ENCODE measurements at regions of chr17 and their contacts with region 1.

Region 1: DNA sequence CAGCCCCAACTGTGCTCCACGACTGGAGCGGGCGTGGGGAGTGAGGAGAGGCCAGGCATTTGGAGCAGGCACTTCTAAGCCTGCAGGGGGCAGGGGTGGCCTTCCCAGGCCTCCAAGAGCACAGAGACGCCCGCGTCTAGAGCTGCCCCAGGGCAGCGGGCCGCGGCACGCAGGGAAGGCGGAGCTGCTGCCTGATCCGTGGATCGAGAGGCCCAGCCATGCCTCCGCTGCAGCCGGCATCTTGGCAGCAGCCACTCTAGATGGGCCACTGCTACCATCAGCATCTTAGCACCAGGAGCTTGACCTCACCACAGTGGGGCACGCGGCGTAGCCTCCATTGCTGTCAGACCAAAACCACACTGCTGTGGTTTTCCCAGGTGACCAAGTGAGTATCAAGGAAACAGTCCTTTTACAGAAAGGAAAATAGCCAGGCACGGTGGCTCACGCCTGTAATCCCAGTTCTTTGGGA is 20.4 kb upstream of the WDR45B start:
- DNase-seq: peak; percentile 65
- H3K4me3 Mint-ChIP-seq: no peak overlapping the region
- H3K27ac Mint-ChIP-seq: no peak overlapping the region
- H3K4me1 Mint-ChIP-seq: peaks cover 2% of the 10 kb centered on the region
- H3K27me3 Mint-ChIP-seq: no peaks in the 10 kb centered on the region

Region 2: GRCh38 chr17:82502207-82502606 is 166.5 kb before region 1 on chr17:
- CTCF ChIA-PET with region 1: no interaction called
- POLR2A ChIA-PET with region 1: no interaction called
- intact Hi-C with region 1: no loop called
- DNase-seq: no peak
- H3K4me3 Mint-ChIP-seq: no peak overlapping the region
- H3K27ac Mint-ChIP-seq: no peak overlapping the region
- H3K4me1 Mint-ChIP-seq: peaks cover 15% of the 10 kb centered on the region
- H3K27me3 Mint-ChIP-seq: no peaks in the 10 kb centered on the region

Region 3: DNA sequence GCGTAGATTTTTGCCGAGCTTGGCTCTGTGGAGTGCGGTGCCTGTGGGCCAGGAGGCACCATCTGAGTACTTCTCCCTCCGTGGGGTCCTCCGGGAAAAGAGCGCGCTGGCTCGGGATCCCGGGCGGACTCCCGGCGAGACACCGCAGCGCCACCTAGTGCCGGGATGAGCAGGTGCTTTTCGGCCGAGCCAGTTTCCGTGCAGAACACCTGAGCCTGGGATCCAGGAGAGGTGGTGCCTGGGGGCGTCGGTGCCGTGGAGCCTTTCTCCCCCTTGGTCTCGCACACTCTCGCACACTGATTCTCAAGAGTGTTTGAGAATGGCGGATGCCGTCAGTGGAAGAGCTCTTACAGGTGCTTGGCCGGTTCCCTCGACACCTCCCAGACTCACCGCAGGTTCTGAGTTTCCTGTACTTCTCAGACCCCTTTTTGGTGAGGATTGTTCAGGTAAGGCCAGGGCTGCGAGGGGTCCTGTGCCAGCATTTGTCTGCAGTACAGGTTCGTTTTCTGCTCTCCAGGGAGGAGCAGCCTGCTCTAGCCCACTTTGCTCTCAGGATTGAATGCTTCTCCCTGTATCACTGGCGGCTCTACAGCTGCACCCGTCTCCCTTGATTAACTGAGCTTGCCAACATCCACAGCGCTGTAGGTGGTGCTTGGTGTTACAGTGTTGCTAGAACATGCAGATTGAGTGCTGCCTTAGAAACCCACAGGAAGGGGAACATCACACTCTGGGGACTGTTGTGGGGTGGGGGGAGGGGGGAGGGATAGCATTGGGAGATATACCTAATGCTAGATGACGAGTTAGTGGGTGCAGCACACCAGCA is 106.5 kb after region 1 on chr17:
- CTCF ChIA-PET with region 1: interaction called, 25 read pairs
- POLR2A ChIA-PET with region 1: no interaction called
- intact Hi-C with region 1: loop called (anchors 10 kb)
- DNase-seq: peak; percentile 52
- H3K4me3 Mint-ChIP-seq: no peak overlapping the region
- H3K27ac Mint-ChIP-seq: no peak overlapping the region
- H3K4me1 Mint-ChIP-seq: peaks cover 5% of the 10 kb centered on the region
- H3K27me3 Mint-ChIP-seq: no peaks in the 10 kb centered on the region

Measured in activated CD4-positive, alpha-beta memory T cell treated with anti-CD3 and anti-CD28 coated beads for 36 hours (primary cell).